Activated T-helper 1 cell treated with anti-CD3 and anti-CD28 coated beads, Interleukin-12 subunit alpha, Interleukin-12 subunit beta, Interleukin-2, Interleukin-4 antibody, amounts not matched to agents 30 ng/mL and 10 ng/mL and 1 ng/mL, durations not matched to agents 14 hours and 24 hours and 36 hours (primary cell): ENCODE measurements at regions of chr18 and their contacts with region 1.

Region 1: DNA sequence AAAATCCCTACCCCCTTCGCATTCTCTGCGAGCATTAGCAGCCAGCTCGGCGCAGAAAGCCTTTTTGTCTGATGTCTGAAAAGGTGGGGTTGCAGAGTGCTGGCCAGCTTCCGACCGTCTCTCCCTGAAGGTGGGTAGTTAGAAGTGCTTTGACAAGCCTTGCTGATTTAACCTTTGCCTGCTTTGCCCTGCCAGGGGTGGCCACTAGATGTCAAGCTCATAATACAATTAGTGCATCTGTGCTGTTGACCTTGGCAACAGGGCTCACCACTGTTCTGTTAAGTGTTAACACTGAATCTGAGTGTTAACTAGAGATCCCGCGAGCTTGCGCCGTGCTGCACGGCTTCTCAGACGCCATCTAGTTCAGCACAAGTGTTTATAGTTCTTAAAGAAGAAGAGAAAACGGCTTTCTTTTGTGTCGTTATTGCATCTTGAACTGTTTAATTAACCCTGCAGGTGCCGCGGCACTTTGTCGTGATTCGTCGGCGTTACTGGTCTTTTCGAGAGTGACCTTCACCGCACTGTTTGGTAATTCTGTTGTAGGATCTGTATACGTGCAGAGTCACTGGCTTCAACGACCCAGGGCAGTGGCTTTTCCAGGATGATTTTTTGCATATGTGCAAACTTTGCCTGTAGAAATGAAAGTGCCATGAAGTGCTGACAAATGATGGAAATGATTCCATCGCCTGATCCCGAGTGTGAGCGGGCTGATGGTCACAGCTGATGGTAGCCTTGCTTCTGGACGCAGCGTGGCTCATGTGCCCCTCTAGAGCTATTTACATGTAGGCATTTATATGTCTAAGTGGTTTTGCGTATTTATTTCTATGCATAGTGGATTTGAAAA is 5.5 kb downstream of the SALL3 start:
- DNase-seq: no peak
- H3K4me3 Mint-ChIP-seq: no peak overlapping the region
- H3K27ac Mint-ChIP-seq: no peak overlapping the region
- H3K4me1 Mint-ChIP-seq: no peaks in the 10 kb centered on the region
- H3K27me3 Mint-ChIP-seq: peaks cover 69% of the 10 kb centered on the region

Region 2: DNA sequence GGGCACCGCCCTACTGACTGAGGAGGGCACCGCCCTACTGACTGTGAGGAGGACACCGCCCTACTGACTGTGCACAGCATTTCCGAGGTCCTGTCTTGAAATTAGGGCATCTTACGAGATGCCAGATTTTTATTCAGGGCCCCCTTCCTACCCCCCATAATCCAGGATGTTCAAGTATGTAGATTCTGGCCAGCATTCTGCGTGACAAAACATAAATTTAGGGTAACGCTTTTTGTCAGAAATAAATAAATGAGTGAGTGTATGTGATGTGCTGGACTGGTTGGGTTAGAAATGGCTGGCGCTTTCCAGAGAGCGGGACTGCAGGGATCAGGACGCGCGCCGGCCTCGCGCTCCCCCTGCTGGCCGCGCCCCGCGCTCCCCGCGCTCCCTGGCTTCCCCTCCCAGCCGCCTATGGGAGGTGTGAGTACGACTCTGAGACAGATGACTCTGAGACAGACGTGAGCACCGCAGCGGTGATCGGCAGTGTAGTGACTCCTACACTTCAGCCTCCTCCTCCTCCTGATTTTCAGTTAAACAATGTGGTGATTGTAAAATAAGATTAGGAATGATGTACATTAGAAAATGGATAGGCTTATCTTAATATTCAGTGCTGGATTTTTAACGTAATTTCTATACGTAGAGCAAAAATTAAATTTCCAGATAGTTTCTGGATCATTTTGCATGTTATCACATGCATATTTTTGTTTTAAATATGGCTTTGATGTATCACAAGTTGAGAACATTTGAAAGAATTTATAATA is 261.4 kb after region 1 on chr18:
- intact Hi-C with region 1: loop called (anchors 1 kb)
- DNase-seq: peak; percentile 59
- H3K4me3 Mint-ChIP-seq: no peak overlapping the region
- H3K27ac Mint-ChIP-seq: no peak overlapping the region
- H3K4me1 Mint-ChIP-seq: peaks cover 13% of the 10 kb centered on the region
- H3K27me3 Mint-ChIP-seq: peaks cover 2% of the 10 kb centered on the region